ENCODE measurements at regions of chr1 and their contacts with region 1.

Region 1: GRCh38 chr1:94335950-94336349 is 82.2 kb upstream of the ABCD3 start:
- DNase-seq: peak in 4 of 6 donors; percentile 41 to 80 (median 70)
- ATAC-seq: peak; percentile 89 to 99 (median 98)
- H3K4me3 ChIP-seq: no peak overlapping the region
- H3K27ac ChIP-seq: no peak overlapping the region
- H3K4me1 ChIP-seq: peaks cover 0 to 5% (median 0%) of the 10 kb centered on the region in 3 donors
- H3K27me3 ChIP-seq: no peaks in the 10 kb centered on the region
- CTCF ChIP-seq: peak; percentile 34 to 67 (median 58)

Region 2: DNA sequence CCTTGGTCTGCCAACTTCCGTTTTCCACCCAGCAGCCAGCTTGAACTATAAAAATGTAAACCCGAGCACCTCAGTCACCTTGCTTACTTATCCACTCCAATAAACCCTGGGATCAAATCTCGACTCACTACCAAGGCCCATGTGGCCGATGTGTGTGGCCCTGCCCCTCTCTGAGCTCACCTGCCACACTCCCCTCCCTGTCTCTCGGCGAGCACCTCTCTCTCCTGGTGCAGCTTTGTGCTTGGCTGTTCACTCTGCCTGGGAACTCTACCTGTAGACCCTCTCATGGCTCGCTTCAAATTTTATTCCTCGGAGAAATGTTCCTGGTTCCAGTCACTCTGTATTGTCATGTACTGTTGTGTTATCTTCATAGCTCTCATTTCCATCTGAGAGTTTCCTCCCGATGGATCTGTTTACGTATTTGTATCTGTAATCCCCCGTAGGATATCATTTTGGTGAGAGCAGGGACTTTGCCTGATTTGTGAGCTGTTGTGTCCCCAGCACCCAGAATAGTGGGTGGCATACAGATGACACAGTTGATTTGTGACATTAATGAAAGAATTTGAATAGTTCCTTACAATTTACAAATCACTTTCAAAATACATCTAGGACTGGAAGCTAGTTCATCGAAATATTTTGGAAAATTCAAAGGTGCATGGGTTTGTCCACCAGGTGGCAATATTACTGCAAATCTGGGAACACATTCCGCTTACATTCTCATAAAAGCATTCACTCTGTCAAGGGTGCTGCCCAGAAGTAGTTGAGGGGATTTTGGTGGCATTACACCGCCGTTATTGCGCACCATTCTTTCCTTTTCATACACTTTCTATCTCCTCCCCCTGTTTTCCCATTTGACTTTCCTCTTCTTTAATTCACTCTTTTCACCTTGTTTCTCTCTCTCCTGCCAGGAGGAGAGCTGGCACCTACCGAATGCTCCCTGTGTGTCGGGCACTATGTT is 310.3 kb before region 1 on chr1:
- intact Hi-C with region 1: loop called in 1 of 3 experiments (anchors 5 kb)
- DNase-seq: peak in 1 of 6 donors; percentile 44
- ATAC-seq: peak; percentile 63 to 86 (median 80)
- H3K4me3 ChIP-seq: peak overlapping the region in 1 of 4 donors; percentile 11
- H3K27ac ChIP-seq: no peak overlapping the region
- H3K4me1 ChIP-seq: no peaks in the 10 kb centered on the region
- H3K27me3 ChIP-seq: no peaks in the 10 kb centered on the region
- CTCF ChIP-seq: peak; percentile 40 to 77 (median 70)

Region 3: GRCh38 chr1:94055459-94056122 is 280.4 kb before region 1 on chr1:
- intact Hi-C with region 1: loop called (anchors 5 to 10 kb)
- DNase-seq: no peak
- ATAC-seq: no peak
- H3K4me3 ChIP-seq: no peak overlapping the region
- H3K27ac ChIP-seq: no peak overlapping the region
- H3K4me1 ChIP-seq: no peaks in the 10 kb centered on the region
- H3K27me3 ChIP-seq: no peaks in the 10 kb centered on the region
- CTCF ChIP-seq: no peak

Region 4: GRCh38 chr1:94602316-94602715 is 266.4 kb after region 1 on chr1:
- intact Hi-C with region 1: no loop called
- DNase-seq: no peak
- ATAC-seq: peak in 3 of 4 donors; percentile 18 to 48 (median 39)
- H3K4me3 ChIP-seq: no peak overlapping the region
- H3K27ac ChIP-seq: no peak overlapping the region
- H3K4me1 ChIP-seq: peaks cover 0 to 8% (median 4%) of the 10 kb centered on the region in 3 donors
- H3K27me3 ChIP-seq: no peaks in the 10 kb centered on the region
- CTCF ChIP-seq: no peak